Activated CD4-positive, alpha-beta T cell treated with anti-CD3 and anti-CD28 coated beads, Interleukin-2, amount 10 ng/mL, durations not matched to agents 7 days and 5 days (primary cell): ENCODE measurements at regions of chr11 and their contacts with region 1.

Region 1: GRCh38 chr11:63862923-63863322 is 24.0 kb downstream of the MARK2 start:
- DNase-seq: peak; percentile 21
- H3K4me3 Mint-ChIP-seq: no peak overlapping the region
- H3K27ac Mint-ChIP-seq: peak overlapping the region; percentile 83
- H3K4me1 Mint-ChIP-seq: peaks cover 56% of the 10 kb centered on the region
- H3K27me3 Mint-ChIP-seq: no peaks in the 10 kb centered on the region

Region 2: GRCh38 chr11:63610604-63611394 is 252.1 kb before region 1 on chr11:
- CTCF ChIA-PET with region 1: no interaction called
- POLR2A ChIA-PET with region 1: no interaction called
- DNase-seq: no peak
- H3K4me3 Mint-ChIP-seq: no peak overlapping the region
- H3K27ac Mint-ChIP-seq: no peak overlapping the region
- H3K4me1 Mint-ChIP-seq: peaks cover 14% of the 10 kb centered on the region
- H3K27me3 Mint-ChIP-seq: peaks cover 12% of the 10 kb centered on the region

Region 3: DNA sequence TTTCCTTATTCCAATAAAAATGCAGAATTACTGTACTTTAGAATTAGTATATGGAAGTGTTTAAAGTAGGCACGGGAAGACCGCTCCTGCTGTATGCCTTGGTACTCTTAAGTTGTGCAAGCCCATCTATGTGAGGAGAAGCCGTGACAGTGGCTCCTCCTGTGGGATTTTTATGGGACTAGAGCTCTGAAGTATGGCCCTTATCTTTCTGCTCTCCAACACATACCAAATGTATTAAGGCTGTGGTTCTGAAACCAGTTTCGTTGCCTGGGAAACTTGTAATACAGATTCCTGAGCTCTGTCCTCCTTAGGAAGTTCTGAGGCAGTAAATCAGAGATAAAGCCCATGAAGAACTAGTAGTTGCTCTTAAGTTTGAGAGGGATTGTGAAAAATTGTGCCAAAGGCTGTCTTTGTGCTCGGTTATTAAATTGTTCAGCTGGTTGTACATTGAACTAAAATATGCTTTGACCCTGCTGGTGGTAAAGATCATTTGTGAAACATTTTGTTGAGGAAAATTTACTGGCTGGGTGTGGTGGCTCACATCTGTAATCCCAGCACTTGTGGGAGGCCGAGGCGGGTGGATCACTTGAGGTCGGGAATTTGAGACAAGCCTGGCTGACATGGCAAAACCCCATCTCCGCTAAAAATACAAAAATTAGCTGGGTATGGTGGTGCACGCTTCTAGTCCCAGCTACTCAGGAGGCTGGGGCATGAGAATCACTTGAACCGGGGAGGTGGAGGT is 152.3 kb before region 1 on chr11:
- CTCF ChIA-PET with region 1: no interaction called
- POLR2A ChIA-PET with region 1: no interaction called
- DNase-seq: no peak
- H3K4me3 Mint-ChIP-seq: no peak overlapping the region
- H3K27ac Mint-ChIP-seq: no peak overlapping the region
- H3K4me1 Mint-ChIP-seq: no peaks in the 10 kb centered on the region
- H3K27me3 Mint-ChIP-seq: no peaks in the 10 kb centered on the region

Region 4: GRCh38 chr11:63874511-63874910 is 11.6 kb after region 1 on chr11:
- CTCF ChIA-PET with region 1: interaction called, 13 read pairs
- POLR2A ChIA-PET with region 1: no interaction called
- DNase-seq: no peak
- H3K4me3 Mint-ChIP-seq: no peak overlapping the region
- H3K27ac Mint-ChIP-seq: no peak overlapping the region
- H3K4me1 Mint-ChIP-seq: peaks cover 65% of the 10 kb centered on the region
- H3K27me3 Mint-ChIP-seq: no peaks in the 10 kb centered on the region

Region 5: DNA sequence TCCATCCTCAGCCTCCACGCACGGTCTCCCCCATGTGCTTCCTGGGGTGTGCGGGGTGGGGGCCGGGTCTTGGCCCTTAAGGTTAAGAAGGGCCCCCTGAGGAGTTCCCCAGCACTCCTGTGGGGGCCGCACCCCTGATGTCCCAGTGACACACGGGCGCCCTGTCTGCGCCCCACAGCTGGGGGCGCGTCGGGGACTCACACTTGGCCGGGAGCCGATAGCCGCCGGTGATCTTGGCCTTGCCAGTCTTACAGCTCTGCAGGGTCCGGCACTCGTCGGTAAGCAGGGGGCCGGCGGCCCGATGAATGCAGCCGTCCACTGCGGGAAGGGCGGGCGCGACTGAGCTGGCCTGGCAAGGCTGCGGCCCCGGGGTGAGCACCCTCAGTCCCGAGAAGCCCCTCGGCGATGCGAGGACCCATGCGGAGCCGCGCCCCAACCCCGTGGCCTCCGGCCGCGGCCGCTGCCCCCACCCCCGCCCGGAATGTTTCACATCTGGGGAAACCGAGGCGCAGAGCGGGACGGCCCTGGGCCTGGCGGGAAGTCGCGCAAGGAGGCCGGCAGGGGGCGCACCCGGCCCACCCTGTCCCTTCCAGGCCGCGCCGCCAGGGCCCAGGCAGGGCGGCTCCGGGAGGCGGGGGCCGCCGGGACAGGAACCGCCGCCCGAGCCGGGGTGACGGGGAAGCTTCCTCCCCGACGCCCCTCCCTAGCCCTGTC is 137.3 kb after region 1 on chr11:
- CTCF ChIA-PET with region 1: no interaction called
- POLR2A ChIA-PET with region 1: no interaction called
- DNase-seq: peak; percentile 72
- H3K4me3 Mint-ChIP-seq: no peak overlapping the region
- H3K27ac Mint-ChIP-seq: no peak overlapping the region
- H3K4me1 Mint-ChIP-seq: peaks cover 13% of the 10 kb centered on the region
- H3K27me3 Mint-ChIP-seq: peaks cover 4% of the 10 kb centered on the region